A673 (cell line): ENCODE measurements at regions of chr19 and their contacts with region 1.

Region 1: GRCh38 chr19:9934132-9934950 is 2.0 kb downstream of the OLFM2 start:
- DNase-seq: peak; percentile 96
- H3K4me3 ChIP-seq: peak overlapping the region; percentile 76
- H3K27ac ChIP-seq: peak overlapping the region; percentile 71
- H3K4me1 ChIP-seq: peaks cover 20% of the 10 kb centered on the region
- H3K27me3 ChIP-seq: no peaks in the 10 kb centered on the region
- CTCF ChIP-seq: peak; percentile 94

Region 2: DNA sequence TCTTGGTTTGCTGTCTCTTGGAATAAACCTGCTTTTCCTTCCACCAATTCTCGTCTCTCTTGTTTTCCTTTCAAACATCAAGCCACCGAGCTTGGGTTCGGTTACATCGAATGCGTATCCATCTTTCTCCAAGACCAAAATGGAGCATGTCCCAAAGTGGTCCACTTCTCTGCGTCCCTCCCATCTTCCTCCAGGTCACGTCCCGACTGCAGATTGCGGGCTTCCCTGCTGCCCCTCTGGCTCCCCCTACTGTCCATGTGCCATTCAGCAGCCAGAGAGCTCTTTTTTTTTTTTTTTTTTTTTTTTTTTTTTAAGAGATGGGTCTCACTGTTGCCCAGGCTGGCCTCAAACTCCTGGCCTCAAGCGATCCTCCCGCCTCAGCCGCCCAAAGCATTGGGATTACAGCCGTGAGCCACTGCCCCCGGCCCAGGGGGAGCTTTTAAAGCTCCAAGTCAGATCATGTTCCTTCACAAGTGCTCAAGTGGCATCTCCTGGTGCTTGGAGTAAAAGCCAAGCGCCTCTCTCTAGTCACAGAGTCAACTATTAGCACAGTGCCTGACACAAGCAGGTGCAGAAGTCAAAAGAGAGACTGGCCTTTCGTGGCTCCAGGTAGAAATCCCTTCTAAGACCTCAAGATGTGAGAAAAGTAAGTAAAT is 66.0 kb after region 1 on chr19:
- CTCF ChIA-PET with region 1: interaction called, 15 read pairs
- POLR2A ChIA-PET with region 1: no interaction called
- intact Hi-C with region 1: loop called (anchors 1 kb)
- DNase-seq: peak; percentile 84
- H3K4me3 ChIP-seq: no peak overlapping the region
- H3K27ac ChIP-seq: no peak overlapping the region
- H3K4me1 ChIP-seq: peaks cover 3% of the 10 kb centered on the region
- H3K27me3 ChIP-seq: no peaks in the 10 kb centered on the region
- CTCF ChIP-seq: peak; percentile 98

Region 3: DNA sequence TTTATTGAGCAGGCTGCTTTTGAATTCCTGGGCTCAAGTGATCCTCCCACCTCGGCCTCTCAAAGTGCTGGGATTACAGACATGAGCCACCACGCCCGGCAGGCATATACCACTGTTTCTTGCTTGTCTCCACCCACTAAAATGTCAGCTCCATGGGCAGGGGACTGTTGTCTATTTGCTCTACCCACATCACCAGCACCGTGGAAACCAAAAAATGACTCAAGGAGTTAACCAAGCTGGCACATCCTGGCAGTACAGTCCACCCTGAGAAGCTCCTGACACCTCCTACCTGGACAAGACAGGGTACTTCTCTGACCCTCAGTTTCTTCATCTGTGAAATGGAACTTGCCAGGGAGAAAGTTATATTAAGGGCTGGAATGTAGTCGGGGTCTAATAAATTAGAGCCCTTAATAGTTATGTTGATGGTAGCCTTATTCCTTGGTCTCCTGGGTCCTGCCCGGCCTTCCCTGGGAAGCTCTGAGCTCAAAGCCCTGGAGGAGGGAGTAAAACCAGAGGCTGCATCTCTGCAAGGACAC is 92.9 kb after region 1 on chr19:
- CTCF ChIA-PET with region 1: interaction called, 16 read pairs
- POLR2A ChIA-PET with region 1: no interaction called
- intact Hi-C with region 1: loop called (anchors 1 kb)
- DNase-seq: peak; percentile 34
- H3K4me3 ChIP-seq: peak overlapping the region; percentile 3
- H3K27ac ChIP-seq: no peak overlapping the region
- H3K4me1 ChIP-seq: no peaks in the 10 kb centered on the region
- H3K27me3 ChIP-seq: no peaks in the 10 kb centered on the region
- CTCF ChIP-seq: no peak

Region 4: DNA sequence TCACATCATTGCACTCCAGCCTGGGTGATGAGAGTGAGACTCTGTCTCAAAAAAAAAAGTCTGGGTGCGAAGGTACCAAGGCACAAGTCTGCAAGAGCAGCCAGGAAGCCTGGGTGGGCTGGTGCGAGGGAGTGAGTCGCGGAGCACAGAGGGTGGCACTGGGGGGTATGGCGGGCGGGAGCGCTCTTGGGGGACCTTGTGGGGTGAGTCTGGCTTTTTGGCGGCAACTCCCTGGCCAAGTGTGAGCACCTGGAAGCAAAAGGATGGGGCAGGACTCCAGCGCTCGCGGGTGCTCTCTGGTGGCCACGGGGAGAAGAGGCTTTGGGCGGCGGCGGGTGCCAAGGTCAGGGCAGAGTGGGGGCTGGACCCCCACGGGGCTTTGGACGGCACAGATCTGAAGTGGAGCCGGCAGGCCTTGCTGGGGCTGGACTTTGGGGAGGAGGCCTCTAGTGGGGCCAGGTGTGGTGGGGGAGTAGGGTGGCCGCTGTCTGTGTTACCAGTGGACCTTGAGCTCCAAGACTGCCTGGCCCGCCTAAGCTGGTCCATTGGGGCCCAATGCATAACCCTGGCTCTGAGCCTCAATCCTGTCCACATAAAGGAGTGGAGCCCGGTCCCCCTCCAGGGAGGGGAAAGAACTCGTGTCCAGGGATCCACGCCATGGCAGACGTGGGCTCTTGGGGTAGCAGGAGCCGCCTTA is 178.7 kb after region 1 on chr19:
- CTCF ChIA-PET with region 1: no interaction called
- POLR2A ChIA-PET with region 1: no interaction called
- intact Hi-C with region 1: loop called (anchors 5 kb)
- DNase-seq: peak; percentile 71
- H3K4me3 ChIP-seq: no peak overlapping the region
- H3K27ac ChIP-seq: peak overlapping the region; percentile 46
- H3K4me1 ChIP-seq: peaks cover 9% of the 10 kb centered on the region
- H3K27me3 ChIP-seq: no peaks in the 10 kb centered on the region
- CTCF ChIP-seq: peak; percentile 73

Region 5: GRCh38 chr19:10137751-10138682 is 203.7 kb after region 1 on chr19:
- CTCF ChIA-PET with region 1: no interaction called
- POLR2A ChIA-PET with region 1: no interaction called
- intact Hi-C with region 1: no loop called
- DNase-seq: no peak
- H3K4me3 ChIP-seq: no peak overlapping the region
- H3K27ac ChIP-seq: no peak overlapping the region
- H3K4me1 ChIP-seq: no peaks in the 10 kb centered on the region
- H3K27me3 ChIP-seq: no peaks in the 10 kb centered on the region
- CTCF ChIP-seq: no peak

Region 6: GRCh38 chr19:10251792-10252694 is 317.7 kb after region 1 on chr19 and contains the start of gene MRPL4:
- CTCF ChIA-PET with region 1: interaction called, 5 read pairs
- POLR2A ChIA-PET with region 1: no interaction called
- intact Hi-C with region 1: loop called (anchors 1 kb)
- DNase-seq: peak; percentile 99
- H3K4me3 ChIP-seq: peak within 1 kb of the TSS; percentile 79
- H3K27ac ChIP-seq: peak within 1 kb of the TSS; percentile 81
- H3K4me1 ChIP-seq: peaks cover 5% of the 10 kb centered on the region
- H3K27me3 ChIP-seq: no peaks in the 10 kb centered on the region
- CTCF ChIP-seq: no peak
- total RNA-seq, gene MRPL4: 107 and 112 TPM in 2 replicates

Region 7: DNA sequence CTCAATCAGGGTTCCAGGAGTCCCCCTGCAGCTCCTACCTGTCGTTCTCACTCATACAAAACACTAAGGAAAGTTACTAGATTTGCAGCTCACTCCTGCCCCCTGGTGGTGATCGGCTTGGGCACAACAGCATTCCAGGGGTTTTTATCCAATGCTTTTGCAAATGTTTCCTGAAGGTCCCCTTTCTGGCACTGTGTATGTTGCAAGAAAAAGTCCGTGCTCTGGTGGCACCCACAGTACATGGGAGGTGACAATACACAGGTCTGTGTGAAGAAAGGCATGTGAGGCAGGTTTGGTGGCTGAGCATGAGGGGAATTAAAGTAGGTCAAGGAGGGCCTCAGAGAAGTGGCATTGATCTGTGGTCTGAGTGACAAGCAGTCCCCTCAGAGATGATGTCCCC is 454.6 kb after region 1 on chr19:
- CTCF ChIA-PET with region 1: interaction called, 4 read pairs
- POLR2A ChIA-PET with region 1: no interaction called
- intact Hi-C with region 1: loop called (anchors 5 kb)
- DNase-seq: peak; percentile 86
- H3K4me3 ChIP-seq: no peak overlapping the region
- H3K27ac ChIP-seq: no peak overlapping the region
- H3K4me1 ChIP-seq: no peaks in the 10 kb centered on the region
- H3K27me3 ChIP-seq: no peaks in the 10 kb centered on the region
- CTCF ChIP-seq: peak; percentile 97